A673 (cell line): ENCODE measurements at regions of chr6 and their contacts with region 1.

Region 1: GRCh38 chr6:158737082-158737709 is 82.0 kb downstream of the EZR start:
- DNase-seq: no peak
- H3K4me3 ChIP-seq: no peak overlapping the region
- H3K27ac ChIP-seq: no peak overlapping the region
- H3K4me1 ChIP-seq: no peaks in the 10 kb centered on the region
- H3K27me3 ChIP-seq: no peaks in the 10 kb centered on the region
- CTCF ChIP-seq: no peak

Region 2: GRCh38 chr6:158752613-158753012 is 15.4 kb after region 1 on chr6:
- CTCF ChIA-PET with region 1: no interaction called
- POLR2A ChIA-PET with region 1: interaction called, 12 read pairs
- intact Hi-C with region 1: no loop called
- DNase-seq: peak; percentile 88
- H3K4me3 ChIP-seq: no peak overlapping the region
- H3K27ac ChIP-seq: peak overlapping the region; percentile 35
- H3K4me1 ChIP-seq: peaks cover 40% of the 10 kb centered on the region
- H3K27me3 ChIP-seq: no peaks in the 10 kb centered on the region
- CTCF ChIP-seq: peak; percentile 59